WTC11 (cell line): ENCODE measurements at regions of chr5 and their contacts with region 1.

Region 1: DNA sequence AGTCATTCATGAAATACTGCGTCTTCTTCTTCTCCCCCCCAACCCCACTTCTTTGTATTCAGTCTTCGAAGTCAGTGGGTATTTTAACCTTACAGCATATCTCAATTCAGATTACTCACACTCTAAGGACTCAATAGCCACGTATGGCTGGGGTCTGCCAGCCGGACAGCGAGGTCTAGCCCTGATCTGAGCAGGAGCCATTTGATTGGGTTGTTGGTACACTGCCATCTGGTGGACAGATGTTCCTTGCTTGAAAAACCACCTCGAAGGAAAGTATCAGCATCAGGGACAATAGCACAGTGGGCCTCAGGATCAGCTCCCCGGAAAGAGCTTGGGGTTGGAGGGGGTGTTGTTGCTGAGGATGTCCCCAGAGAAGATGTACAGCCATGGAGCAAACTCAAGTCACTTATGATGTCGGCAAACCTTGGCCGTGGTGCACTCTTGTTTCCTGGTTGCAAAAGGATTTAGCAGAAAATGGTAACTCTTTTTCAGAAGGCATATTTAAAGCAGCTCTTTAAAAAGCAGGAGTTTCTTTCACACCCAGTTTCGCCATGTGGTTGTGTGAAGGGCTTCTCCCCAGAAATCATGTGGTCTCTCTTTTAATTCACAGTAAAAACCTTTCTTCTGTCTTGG is 31.7 kb upstream of the KCNMB1 start:
- DNase-seq: peak; percentile 73
- ATAC-seq: peak; percentile 94
- H3K4me3 Mint-ChIP-seq: no peak overlapping the region
- H3K27ac Mint-ChIP-seq: no peak overlapping the region
- H3K4me1 Mint-ChIP-seq: peaks cover 21% of the 10 kb centered on the region
- H3K27me3 Mint-ChIP-seq: no peaks in the 10 kb centered on the region
- CTCF ChIP-seq: peak; percentile 63

Region 2: DNA sequence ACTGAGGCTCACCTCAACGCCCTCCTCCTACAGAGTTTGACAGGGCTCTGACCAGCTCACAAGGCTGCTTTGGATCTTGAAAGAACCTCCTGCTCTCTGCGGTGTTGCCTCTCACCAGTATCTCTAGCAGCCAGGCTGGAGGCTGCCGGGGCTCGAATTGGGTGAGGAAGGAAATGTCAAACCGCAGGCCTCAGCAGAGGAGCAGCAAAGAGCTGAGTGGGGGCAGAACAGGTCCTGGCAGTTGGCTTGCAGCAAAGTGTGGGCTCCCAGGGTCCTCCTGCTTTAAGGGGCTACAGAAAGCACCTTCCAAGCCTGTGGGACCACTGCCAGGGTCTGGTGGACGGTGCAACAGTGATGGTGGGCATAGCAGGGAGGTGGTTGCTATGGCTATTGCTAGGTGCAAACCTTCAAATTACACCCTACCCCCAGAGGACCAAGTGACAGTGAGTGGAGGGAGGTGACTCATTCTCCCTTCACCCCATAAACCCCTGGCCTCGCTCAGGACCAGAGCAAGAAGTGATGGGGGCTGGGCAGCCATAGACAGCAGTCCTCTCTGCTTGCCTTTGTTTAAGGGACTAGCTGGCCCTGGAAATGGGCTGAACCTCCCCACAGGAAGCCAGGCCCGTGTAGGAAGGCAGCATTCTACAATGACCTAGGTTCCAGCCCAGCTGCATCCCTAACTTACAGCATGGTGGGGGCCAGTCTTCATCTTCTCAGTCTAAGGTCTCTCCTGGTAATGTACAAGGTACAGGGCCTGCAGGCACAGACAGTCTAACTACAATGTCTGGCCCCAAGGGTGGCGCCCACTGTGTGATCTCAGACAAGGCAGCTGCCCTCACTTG is 142.1 kb before region 1 on chr5:
- CTCF ChIA-PET with region 1: interaction called, 15 read pairs
- POLR2A ChIA-PET with region 1: no interaction called
- DNase-seq: peak; percentile 26
- ATAC-seq: peak; percentile 8
- H3K4me3 Mint-ChIP-seq: no peak overlapping the region
- H3K27ac Mint-ChIP-seq: 0 out of 2 replicates have a peak overlapping the region, but pooled peaks have one; percentile 9
- H3K4me1 Mint-ChIP-seq: peaks cover 54% of the 10 kb centered on the region
- H3K27me3 Mint-ChIP-seq: peaks cover 27% of the 10 kb centered on the region
- CTCF ChIP-seq: no peak

Region 3: DNA sequence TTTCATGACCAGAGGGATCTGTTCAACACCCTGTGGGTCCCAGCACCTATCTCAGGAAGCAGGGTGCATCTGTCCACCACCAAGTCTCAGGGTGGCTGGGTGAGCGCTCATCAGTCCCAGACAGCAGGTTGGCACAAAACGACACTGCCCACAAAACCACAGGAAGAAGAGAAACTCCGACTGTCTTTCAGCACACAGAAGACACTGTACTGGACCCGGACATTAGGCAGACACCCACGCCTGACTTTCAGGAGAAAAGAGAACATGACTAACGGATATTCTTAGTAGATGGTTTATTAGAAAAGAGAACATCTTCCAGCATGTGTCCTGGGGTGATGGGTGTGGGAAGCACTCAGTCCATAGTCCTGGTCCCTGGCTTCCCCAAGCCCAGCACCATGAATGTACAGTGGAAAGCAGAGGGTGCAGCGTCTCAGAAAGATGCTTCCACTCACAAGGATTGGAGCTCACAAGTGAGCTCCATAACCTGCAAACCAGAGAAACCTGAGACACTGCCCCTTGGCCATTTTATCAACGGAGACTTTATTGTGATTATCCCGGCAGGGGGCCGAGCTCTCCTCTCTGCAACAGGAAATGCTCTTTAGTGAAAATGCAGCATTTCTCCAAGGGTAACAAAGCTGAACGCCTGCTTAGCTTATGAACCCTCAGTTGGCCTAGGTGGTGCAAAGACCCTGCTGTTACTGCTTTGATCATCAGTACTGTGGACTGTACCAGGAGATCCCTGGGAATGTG is 87.6 kb before region 1 on chr5:
- CTCF ChIA-PET with region 1: interaction called, 11 read pairs
- POLR2A ChIA-PET with region 1: no interaction called
- DNase-seq: peak; percentile 61
- ATAC-seq: peak; percentile 40
- H3K4me3 Mint-ChIP-seq: peak overlapping the region; percentile 47
- H3K27ac Mint-ChIP-seq: peak overlapping the region; percentile 96
- H3K4me1 Mint-ChIP-seq: peaks cover 75% of the 10 kb centered on the region
- H3K27me3 Mint-ChIP-seq: no peaks in the 10 kb centered on the region; the same call in 1 of the 2 replicates
- CTCF ChIP-seq: no peak

Region 4: GRCh38 chr5:170338933-170339779 is 81.7 kb before region 1 on chr5:
- CTCF ChIA-PET with region 1: interaction called, 11 read pairs
- POLR2A ChIA-PET with region 1: no interaction called
- DNase-seq: peak; percentile 64
- ATAC-seq: peak; percentile 84
- H3K4me3 Mint-ChIP-seq: no peak overlapping the region
- H3K27ac Mint-ChIP-seq: no peak overlapping the region
- H3K4me1 Mint-ChIP-seq: peaks cover 58% of the 10 kb centered on the region
- H3K27me3 Mint-ChIP-seq: no peaks in the 10 kb centered on the region; the same call in none of the 2 replicates
- CTCF ChIP-seq: peak; percentile 63

Region 5: DNA sequence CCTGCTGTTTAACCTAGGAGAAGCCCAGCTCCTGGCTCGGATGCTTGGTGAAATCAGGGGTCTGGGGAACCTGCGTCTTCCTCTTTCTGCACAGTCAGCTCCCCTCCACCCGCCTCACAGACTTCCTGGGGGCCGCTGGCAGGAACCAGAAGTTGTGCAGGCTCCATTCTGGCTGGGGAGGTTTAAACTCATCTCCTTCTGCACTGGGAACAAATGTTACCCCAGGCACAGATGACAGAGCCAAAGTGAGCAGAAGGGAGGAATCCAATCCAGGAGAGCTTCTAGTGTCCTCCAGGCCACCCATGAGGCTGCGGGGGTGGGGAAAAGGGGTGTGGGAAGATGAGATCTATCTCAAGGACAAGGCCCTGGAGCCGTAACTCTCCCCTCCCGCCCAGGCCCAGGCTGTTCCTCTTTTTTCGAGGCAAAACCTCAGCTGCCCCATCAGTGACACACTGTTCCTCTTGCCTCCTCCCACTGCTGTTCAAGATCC is 62.9 kb before region 1 on chr5:
- CTCF ChIA-PET with region 1: interaction called, 11 read pairs
- POLR2A ChIA-PET with region 1: no interaction called
- DNase-seq: no peak
- ATAC-seq: no peak
- H3K4me3 Mint-ChIP-seq: no peak overlapping the region
- H3K27ac Mint-ChIP-seq: no peak overlapping the region
- H3K4me1 Mint-ChIP-seq: peaks cover 60% of the 10 kb centered on the region
- H3K27me3 Mint-ChIP-seq: no peaks in the 10 kb centered on the region
- CTCF ChIP-seq: no peak